Sigmoid colon (tissue), 7 donors: ENCODE measurements at regions of chr15 and their contacts with region 1.

Region 1: DNA sequence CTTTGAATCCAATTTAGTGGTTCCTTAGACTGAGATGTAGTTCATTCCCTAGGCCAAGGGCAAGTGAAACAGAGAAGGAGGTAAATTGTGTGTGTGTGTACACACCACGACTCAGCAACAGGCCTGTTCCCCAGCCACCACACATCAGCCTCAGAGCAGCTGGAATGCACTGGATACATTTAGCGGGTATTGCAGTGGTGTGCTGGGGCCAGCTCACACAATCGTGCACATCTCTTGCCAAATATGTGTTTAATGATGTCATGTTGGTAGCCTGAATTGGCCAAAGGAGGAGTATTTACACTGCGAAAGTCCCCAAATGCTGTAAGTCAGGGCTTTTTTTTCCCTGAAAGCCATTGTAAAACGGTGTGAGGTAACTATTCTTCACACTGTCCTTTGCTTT is 82.3 kb downstream of the RBPMS2 start:
- DNase-seq: peak; percentile 88
- H3K4me3 ChIP-seq: no peak overlapping the region
- H3K27ac ChIP-seq: peak overlapping the region; percentile 77 to 95 (median 88)
- H3K4me1 ChIP-seq: peaks cover 0 to 91% (median 87%) of the 10 kb centered on the region in 4 donors
- H3K27me3 ChIP-seq: no peaks in the 10 kb centered on the region
- CTCF ChIP-seq: no peak
- EP300 ChIP-seq: no peak
- POLR2A ChIP-seq: no peak

Region 2: GRCh38 chr15:64640146-64640871 is 52.8 kb before region 1 on chr15:
- intact Hi-C with region 1: no loop called
- DNase-seq: no peak
- H3K4me3 ChIP-seq: no peak overlapping the region
- H3K27ac ChIP-seq: peak overlapping the region in 2 of 4 donors; percentile 24 to 25
- H3K4me1 ChIP-seq: peaks cover 0 to 35% (median 26%) of the 10 kb centered on the region in 4 donors
- H3K27me3 ChIP-seq: no peaks in the 10 kb centered on the region
- CTCF ChIP-seq: no peak
- EP300 ChIP-seq: no peak
- POLR2A ChIP-seq: no peak

Region 3: DNA sequence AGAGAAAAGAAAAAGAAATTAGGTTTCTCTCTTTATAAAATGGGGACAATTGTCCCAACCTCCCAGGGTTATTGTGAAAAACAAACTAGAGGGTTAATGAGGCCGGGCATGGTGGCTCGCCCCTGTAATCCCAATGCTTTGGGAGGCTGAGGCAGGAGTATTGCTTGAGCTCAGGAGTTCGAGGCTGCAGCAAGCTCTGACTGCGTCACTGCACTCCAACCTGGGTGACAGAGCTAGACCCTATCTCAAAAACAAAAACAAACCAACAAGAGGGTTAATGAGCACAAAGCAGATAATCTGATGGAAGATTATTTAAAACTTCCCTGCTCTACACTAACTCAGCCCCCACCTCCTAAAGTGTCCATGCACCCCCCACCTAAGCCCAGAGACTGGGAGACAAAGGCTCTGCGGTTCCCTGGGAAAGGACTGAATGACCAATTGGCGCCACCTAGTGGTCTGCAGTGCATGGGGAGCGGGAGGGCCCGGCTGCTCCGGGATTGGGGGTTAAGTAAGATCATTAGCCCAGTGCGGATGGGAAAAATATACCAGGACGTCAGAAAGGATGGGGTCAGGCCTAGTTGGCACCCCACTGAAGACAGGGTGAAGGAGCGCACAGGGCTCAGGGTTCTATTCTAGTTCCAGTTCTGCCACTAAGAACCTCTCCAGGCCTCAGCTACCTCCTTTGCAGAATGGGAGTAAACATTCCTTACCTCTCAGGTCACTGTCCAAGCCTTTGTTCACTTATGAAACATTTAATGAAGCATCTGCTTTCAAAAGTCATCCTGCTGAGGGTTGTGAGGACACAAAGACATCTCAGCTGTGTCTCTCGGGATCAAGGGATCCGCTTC is 116.7 kb after region 1 on chr15:
- intact Hi-C with region 1: loop called (anchors 5 kb)
- DNase-seq: peak; percentile 93
- H3K4me3 ChIP-seq: no peak overlapping the region
- H3K27ac ChIP-seq: peak overlapping the region; percentile 89 to 91 (median 90)
- H3K4me1 ChIP-seq: peaks cover 0 to 48% (median 43%) of the 10 kb centered on the region in 4 donors
- H3K27me3 ChIP-seq: no peaks in the 10 kb centered on the region
- CTCF ChIP-seq: peak; percentile 91 to 98 (median 94)
- EP300 ChIP-seq: no peak
- POLR2A ChIP-seq: no peak